HEK293T (cell line): ENCODE measurements at regions of chr1 and their contacts with region 1.

Region 1: DNA sequence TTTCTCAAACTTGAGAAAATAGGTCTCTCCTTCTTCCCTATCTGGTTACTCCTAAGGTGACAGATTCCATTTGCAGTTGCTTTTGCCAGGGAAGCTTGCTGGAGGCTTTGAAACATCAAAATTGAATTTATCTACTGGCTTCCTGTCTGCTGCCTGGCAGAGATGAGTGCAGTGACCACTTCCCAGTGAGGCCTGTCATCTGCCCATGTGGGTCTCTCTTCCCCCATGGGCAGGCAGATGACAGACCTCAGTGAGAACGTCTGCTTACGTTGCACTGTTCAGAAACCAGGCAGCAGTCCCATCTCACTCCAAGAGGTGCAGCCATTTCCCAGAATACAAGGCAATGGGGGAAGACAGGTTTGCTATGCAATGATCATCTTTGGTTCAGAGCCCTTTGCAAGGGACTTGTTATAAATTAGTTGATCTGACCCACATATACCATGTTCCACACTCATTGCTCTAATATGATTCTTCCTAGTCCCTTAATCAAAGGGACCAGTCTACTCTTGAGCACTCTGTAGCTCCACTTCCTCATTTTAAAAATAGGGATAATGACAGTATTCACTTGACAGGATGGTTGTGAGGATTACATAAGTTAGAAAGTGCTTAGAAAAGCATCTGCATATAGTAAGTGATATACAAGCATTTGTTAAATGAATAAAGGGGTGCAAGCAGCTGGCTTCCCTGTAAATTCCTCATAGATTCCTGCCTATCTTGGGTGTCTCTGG is 10.6 kb downstream of the PGBD5 start:
- DNase-seq: no peak

Region 2: DNA sequence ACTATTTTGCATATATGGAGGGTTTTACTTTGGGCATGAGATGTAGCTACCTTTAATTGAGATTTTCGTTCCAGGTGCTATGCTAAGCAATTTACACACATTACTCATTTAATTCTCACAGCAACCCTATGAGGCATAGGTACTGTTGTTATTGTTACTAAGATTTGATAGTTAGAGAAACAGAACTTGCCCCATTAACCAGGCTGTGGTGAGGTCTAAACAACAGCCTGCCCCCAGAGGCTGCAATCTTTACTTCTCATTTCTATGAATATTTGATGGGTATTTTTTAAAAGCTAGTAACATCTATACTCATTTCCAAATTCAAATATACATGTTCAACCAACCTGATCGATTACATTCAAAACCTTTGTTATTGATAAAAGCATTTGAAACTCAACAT is 192.9 kb before region 1 on chr1:
- CTCF ChIA-PET with region 1: interaction called, 12 read pairs
- POLR2A ChIA-PET with region 1: no interaction called
- DNase-seq: peak; percentile 45

Region 3: DNA sequence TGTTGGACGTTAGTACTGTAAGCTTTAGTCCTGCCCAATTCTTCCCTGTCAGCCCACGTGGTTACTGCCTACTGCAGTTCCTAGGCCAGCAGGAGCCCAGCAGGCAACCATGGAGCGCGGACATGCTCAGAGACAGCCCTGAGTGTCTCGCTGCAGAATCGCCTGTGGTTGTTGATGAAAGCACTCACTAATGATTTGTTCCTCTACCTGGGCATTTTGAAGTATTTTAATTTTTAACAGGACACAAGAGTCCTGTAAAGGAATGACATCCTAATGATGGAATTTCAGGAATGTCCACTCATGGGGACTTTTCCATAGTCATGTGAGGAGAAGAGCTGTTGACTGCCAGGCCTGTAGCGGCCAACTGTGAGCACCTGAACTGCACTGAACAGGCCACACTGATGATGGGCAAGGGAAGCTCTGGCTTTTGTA is 33.5 kb before region 1 on chr1:
- CTCF ChIA-PET with region 1: no interaction called
- POLR2A ChIA-PET with region 1: no interaction called
- DNase-seq: no peak

Region 4: GRCh38 chr1:230487773-230488428 is 72.3 kb after region 1 on chr1:
- CTCF ChIA-PET with region 1: no interaction called
- POLR2A ChIA-PET with region 1: no interaction called
- DNase-seq: no peak